ENCODE measurements at regions of chr11 and their contacts with region 1.

Region 1: GRCh38 chr11:57667736-57668435 is at the start of gene ZDHHC5:
- DNase-seq: peak; percentile 100
- H3K4me3 Mint-ChIP-seq: peak within 1 kb of the TSS; percentile 83
- H3K27ac Mint-ChIP-seq: peak within 1 kb of the TSS; percentile 100
- H3K4me1 Mint-ChIP-seq: peaks cover 41% of the 10 kb centered on the region
- H3K27me3 Mint-ChIP-seq: no peaks in the 10 kb centered on the region
- total RNA-seq, gene ZDHHC5: 56.8 to 65.5 TPM

Region 2: DNA sequence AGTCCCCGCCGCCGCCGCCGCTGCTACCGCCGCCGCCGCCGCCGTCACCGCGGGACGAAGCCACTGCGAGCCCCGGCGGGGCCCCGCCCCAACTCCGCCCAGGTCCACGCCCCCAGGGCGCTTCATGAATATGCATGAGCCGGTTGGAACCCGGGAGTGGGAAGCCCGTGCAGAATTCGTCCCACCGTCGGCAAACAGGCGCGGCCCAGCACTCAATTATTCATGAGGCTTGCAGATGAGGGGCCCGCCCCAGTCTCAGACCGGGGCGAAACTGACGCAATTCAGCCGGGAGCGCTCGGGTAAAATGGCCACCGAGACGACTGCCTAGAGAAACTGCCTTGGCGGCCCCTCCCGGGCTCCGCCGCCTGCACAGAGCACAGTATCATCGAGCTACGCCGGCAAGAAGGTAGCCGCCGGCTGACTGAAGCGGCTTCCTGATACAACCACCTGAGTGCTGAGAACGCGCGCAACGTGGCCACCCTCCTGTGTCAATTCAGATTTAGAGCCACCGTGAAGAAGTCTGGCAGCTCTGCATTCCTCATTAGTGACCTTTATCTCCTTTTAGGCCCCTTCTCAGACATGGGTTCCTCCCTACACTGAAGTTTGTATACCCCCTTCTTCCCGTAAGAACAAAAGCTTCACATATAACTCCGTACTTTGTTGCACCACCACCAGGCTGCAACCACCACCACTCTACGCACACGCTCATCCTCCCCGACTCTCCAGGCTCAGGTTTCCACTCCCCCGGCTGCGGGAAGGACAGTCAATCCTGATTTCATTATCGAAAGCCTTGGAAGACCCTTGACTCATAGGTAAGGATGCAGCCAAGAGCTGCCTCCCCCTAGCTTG is 342.8 kb before region 1 on chr11 and contains the start of gene TNKS1BP1:
- CTCF ChIA-PET with region 1: no interaction called
- POLR2A ChIA-PET with region 1: no interaction called
- intact Hi-C with region 1: loop called (anchors 1 kb)
- DNase-seq: peak; percentile 95
- H3K4me3 Mint-ChIP-seq: peak within 1 kb of the TSS; percentile 79
- H3K27ac Mint-ChIP-seq: peak within 1 kb of the TSS; percentile 95
- H3K4me1 Mint-ChIP-seq: peaks cover 42% of the 10 kb centered on the region
- H3K27me3 Mint-ChIP-seq: no peaks in the 10 kb centered on the region
- total RNA-seq, gene TNKS1BP1: 14.0 to 15.1 TPM

Region 3: GRCh38 chr11:57444362-57445121 is 223.3 kb before region 1 on chr11:
- CTCF ChIA-PET with region 1: no interaction called
- POLR2A ChIA-PET with region 1: no interaction called
- intact Hi-C with region 1: no loop called
- DNase-seq: no peak
- H3K4me3 Mint-ChIP-seq: no peak overlapping the region
- H3K27ac Mint-ChIP-seq: no peak overlapping the region
- H3K4me1 Mint-ChIP-seq: no peaks in the 10 kb centered on the region
- H3K27me3 Mint-ChIP-seq: peaks cover 5% of the 10 kb centered on the region

Region 4: GRCh38 chr11:57523419-57523818 is 144.5 kb before region 1 on chr11:
- CTCF ChIA-PET with region 1: no interaction called
- POLR2A ChIA-PET with region 1: no interaction called
- intact Hi-C with region 1: no loop called
- DNase-seq: no peak
- H3K4me3 Mint-ChIP-seq: no peak overlapping the region
- H3K27ac Mint-ChIP-seq: no peak overlapping the region
- H3K4me1 Mint-ChIP-seq: peaks cover 11% of the 10 kb centered on the region
- H3K27me3 Mint-ChIP-seq: no peaks in the 10 kb centered on the region

Region 5: GRCh38 chr11:57567515-57568329 is 100.2 kb before region 1 on chr11 and contains the start of gene UBE2L6:
- CTCF ChIA-PET with region 1: interaction called, 4 read pairs
- POLR2A ChIA-PET with region 1: no interaction called
- intact Hi-C with region 1: loop called (anchors 1 kb)
- DNase-seq: peak; percentile 70
- H3K4me3 Mint-ChIP-seq: peak within 1 kb of the TSS; percentile 92
- H3K27ac Mint-ChIP-seq: peak within 1 kb of the TSS; percentile 98
- H3K4me1 Mint-ChIP-seq: peaks cover 31% of the 10 kb centered on the region
- H3K27me3 Mint-ChIP-seq: no peaks in the 10 kb centered on the region
- total RNA-seq, gene UBE2L6: 152 to 162 TPM

Region 6: GRCh38 chr11:57712256-57713150 is 44.6 kb after region 1 on chr11 and contains the start of gene TMX2:
- CTCF ChIA-PET with region 1: no interaction called
- POLR2A ChIA-PET with region 1: no interaction called
- intact Hi-C with region 1: loop called (anchors 1 kb)
- DNase-seq: peak; percentile 94
- H3K4me3 Mint-ChIP-seq: peak within 1 kb of the TSS; percentile 94
- H3K27ac Mint-ChIP-seq: peak within 1 kb of the TSS; percentile 89
- H3K4me1 Mint-ChIP-seq: peaks cover 53% of the 10 kb centered on the region
- H3K27me3 Mint-ChIP-seq: no peaks in the 10 kb centered on the region
- total RNA-seq, gene TMX2: 54.9 to 57.2 TPM

Region 7: GRCh38 chr11:57792060-57792541 is 124.2 kb after region 1 on chr11:
- CTCF ChIA-PET with region 1: no interaction called
- POLR2A ChIA-PET with region 1: no interaction called
- intact Hi-C with region 1: loop called (anchors 2 kb)
- DNase-seq: peak; percentile 90
- H3K4me3 Mint-ChIP-seq: peak overlapping the region; percentile 55
- H3K27ac Mint-ChIP-seq: peak overlapping the region; percentile 86
- H3K4me1 Mint-ChIP-seq: peaks cover 34% of the 10 kb centered on the region
- H3K27me3 Mint-ChIP-seq: peaks cover 1% of the 10 kb centered on the region